ENCODE measurements at regions of chr14 and their contacts with region 1.

Region 1: GRCh38 chr14:41873686-41874317 is 267.1 kb downstream of the LRFN5 start:
- DNase-seq: peak; percentile 86
- H3K4me3 ChIP-seq: peak overlapping the region; percentile 13
- H3K27ac ChIP-seq: peak overlapping the region; percentile 91
- H3K4me1 ChIP-seq: peaks cover 40% of the 10 kb centered on the region
- H3K27me3 ChIP-seq: no peaks in the 10 kb centered on the region
- CTCF ChIP-seq: no peak

Region 2: DNA sequence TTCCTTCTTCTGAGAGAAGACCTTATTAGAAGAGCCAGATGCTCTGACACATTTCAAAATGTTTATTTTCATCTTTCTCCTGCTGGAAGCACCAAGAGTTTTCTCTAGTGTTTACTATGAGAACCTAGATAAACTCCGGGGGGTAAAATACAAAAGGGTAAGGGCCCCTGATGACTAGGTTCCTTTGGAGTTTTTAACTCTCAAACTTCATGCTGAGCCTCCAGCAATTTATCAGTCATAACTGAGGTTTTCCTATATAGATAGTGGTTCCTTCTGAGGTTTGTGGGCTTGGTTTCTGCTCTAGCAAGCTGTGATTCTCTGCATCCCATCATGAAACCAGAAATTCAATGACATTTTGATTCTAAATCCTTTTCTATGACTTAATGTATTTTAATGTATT is 56.2 kb before region 1 on chr14:
- CTCF ChIA-PET with region 1: no interaction called
- POLR2A ChIA-PET with region 1: no interaction called
- intact Hi-C with region 1: loop called (anchors 5 kb)
- DNase-seq: peak; percentile 80
- H3K4me3 ChIP-seq: no peak overlapping the region
- H3K27ac ChIP-seq: peak overlapping the region; percentile 57
- H3K4me1 ChIP-seq: peaks cover 25% of the 10 kb centered on the region
- H3K27me3 ChIP-seq: no peaks in the 10 kb centered on the region
- CTCF ChIP-seq: no peak

Region 3: DNA sequence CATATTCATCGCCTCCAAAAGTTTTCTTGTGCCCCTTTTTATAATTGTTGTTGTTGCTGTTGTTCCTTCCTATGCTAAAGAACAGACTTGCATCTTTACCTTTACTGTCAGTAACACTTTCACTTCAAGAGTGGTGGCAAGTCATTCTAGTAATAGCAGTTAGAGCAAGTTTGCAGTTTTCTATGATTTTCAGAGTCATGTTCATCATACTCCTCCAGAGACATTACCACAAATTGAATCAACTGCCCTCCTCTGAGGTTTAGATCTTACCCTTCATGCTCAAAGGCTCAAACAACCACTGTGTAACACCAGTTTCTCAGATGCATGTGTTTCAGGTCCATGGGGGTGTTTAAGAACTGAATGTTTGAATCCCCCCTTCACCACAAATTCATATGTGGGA is 496.3 kb after region 1 on chr14:
- CTCF ChIA-PET with region 1: no interaction called
- POLR2A ChIA-PET with region 1: no interaction called
- intact Hi-C with region 1: no loop called
- DNase-seq: no peak
- H3K4me3 ChIP-seq: no peak overlapping the region
- H3K27ac ChIP-seq: no peak overlapping the region
- H3K4me1 ChIP-seq: no peaks in the 10 kb centered on the region
- H3K27me3 ChIP-seq: no peaks in the 10 kb centered on the region
- CTCF ChIP-seq: no peak

Measured in A673 (cell line).